GM10248 (cell line): ENCODE measurements at regions of chr15 and their contacts with region 1.

Region 1: GRCh38 chr15:82551666-82552247 is 11.5 kb upstream of the RPS17 start:
- DNase-seq: peak; percentile 42
- CTCF ChIP-seq: no peak

Region 2: GRCh38 chr15:82177291-82178010 is 374.3 kb before region 1 on chr15:
- CTCF ChIA-PET with region 1: no interaction called
- POLR2A ChIA-PET with region 1: no interaction called
- DNase-seq: no peak
- CTCF ChIP-seq: no peak

Region 3: DNA sequence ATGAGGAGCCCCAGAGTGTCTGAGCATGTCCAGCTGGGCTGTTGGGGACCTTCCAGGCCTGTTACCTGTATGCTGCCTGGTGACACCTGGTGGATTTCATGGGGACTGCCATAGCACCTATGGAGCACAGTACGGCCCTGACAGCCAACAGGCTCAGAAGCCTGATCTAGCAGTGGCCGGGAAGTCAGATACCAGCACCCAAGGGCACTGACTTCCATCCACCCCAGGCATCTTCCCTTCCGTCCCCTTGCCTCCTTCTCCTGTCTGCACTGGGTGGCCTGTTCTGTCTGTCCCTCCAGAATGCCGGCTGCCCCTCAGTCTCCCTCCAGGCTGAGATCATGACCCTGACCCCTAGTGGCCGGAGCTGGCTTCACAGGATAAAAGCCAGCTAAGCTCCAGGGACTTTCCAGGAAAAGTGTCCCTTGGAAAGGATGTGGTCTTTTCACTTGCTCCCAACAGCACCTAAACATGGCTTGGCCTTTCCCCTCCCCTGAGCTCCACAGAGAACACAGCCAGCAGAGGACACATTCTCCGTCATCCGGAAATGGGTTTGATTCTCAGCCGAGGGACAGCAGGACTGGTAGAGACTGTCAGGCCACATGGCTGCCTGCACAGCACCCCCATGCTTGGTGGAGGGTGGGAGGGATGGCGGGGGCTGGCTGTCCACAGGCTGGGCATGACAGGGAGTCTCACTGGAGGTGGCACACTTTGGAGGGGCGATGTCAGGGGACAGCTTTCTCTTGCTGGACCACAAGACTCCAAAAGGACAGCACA is 21.0 kb before region 1 on chr15:
- CTCF ChIA-PET with region 1: interaction called, 10 read pairs
- POLR2A ChIA-PET with region 1: no interaction called
- DNase-seq: peak; percentile 71
- CTCF ChIP-seq: peak; percentile 80

Region 4: DNA sequence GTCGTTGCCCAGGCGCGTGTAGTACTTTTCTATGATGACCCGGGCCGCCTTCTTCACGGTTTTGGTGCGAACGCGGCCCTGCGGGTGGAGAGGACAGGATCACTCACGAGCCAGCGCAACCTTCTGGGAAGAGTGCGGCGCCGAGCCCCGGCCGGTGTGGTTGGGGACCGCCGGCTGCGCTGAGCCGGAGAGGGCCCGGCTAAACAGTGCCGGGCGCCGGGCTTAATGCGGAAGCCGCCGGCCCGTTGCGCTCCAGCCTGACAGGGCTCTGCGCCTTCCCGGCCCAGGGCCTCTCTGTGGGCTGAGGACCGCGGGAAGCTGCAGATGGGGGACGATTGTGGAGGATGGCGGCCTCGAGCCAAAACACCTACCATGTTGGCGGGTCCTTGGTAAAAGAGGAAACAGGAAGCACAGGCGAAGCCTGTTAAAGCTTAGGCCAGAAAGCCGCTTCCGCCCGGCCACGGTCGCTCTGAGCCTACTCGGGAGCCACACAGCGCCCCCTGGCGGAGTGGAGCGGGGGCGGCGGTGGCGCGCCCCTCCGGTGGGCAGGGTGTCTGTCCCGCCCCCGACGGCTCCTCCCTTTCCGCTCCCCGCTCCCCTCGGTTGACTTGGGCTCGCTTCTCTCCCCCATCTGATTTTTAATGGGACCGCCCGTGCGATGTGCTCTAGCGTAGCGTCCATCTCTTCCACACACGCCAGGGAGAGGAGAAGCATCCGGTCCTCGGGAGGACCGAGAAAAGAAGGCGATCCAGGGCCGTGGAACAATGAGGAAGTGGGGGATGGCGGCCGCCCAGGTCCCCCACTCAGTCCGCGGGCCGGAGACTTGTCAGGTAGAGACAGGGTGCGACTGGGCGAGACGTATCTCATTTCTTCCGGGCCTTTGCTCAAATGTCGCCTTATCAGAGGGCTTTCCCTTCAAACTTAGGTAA is 11.4 kb before region 1 on chr15 and contains the start of gene RPS17:
- CTCF ChIA-PET with region 1: interaction called, 15 read pairs
- POLR2A ChIA-PET with region 1: interaction called, 7 read pairs
- DNase-seq: peak; percentile 100
- CTCF ChIP-seq: peak; percentile 95